Activated CD8-positive, alpha-beta T cell treated with anti-CD3 and anti-CD28 coated beads for 36 hours (primary cell): ENCODE measurements at regions of chr20 and their contacts with region 1.

Region 1: DNA sequence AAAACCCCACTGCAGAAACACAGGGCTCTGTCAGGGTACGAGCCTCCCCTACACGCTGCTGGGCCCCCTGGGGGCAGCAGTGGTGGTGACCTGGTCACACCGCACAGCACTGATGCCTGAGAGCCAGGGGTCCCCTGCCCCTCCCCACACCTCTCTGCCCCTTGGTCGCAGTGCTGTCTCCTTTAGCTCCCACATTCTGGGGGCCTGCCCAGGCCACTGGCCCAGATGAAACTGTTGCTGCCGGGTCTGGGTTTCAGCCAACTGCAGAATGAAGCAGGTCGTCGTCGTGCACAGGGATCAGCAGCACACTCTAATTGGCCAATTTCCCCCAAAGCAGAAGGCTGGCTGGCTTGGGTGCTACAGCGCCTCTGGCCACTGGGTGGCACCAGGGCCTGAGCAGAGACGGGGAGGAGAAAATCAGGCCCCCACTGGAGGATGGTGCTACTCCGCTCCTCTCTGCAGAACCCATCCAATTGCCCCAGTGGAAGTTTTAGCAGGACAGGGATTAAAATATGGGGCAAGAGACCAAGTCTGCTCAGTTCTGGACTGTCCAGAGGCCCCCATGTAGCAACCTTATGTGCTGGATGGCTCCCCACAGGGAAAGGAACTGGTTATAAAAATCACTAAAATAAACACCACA is 26.1 kb downstream of the DIDO1 start:
- DNase-seq: peak; percentile 85
- ATAC-seq: peak; percentile 95
- H3K4me3 Mint-ChIP-seq: no peak overlapping the region
- H3K27ac Mint-ChIP-seq: peak overlapping the region; percentile 60
- H3K4me1 Mint-ChIP-seq: peaks cover 40% of the 10 kb centered on the region
- H3K27me3 Mint-ChIP-seq: no peaks in the 10 kb centered on the region
- CTCF ChIP-seq: peak; percentile 97

Region 2: DNA sequence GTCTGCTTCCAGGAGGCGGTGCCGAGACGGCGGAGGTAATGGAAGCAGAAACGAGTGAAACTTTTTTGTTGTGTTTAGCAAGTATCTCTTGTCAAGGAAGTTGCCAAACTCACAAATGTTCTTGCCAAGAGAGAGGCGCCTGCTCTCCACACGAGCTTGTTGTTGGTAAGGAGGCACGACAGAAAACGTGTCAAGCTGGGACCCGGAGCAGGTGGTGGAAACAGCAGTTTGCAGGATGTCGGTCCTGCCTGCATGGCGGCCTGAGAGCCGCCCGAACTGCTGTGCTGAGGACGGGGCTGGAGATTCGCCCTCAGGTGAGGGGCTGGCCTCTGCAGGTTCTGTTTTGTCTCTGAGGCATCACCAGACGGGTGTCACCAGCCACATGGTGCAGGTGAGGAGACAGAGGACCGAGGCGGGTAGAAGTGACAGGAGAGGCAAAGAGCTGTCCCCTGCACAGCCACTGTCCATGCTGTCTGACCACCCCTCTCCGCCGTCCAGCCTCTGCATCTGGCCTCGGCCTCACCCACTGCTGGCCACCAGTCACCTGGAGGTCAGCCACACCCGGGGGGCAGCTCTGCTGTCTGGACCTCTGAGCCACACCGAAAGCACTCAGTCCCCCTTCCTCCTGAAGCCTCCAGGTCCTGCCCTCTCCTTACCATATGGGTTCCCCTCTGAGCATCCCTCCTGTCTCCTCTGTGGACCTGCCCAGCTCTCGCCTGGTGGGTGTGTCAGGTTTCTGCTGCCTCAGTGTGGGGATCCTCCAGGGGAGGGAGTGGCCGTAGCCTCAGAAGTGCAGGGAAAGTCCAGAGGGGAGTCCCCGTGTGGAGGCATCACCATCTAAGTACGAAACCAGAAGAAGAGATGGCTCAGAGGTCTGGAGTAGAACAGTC is 1096.0 kb before region 1 on chr20:
- CTCF ChIA-PET with region 1: no interaction called
- POLR2A ChIA-PET with region 1: no interaction called
- intact Hi-C with region 1: no loop called
- DNase-seq: peak; percentile 19
- ATAC-seq: peak; percentile 55
- H3K4me3 Mint-ChIP-seq: no peak overlapping the region
- H3K27ac Mint-ChIP-seq: no peak overlapping the region
- H3K4me1 Mint-ChIP-seq: peaks cover 5% of the 10 kb centered on the region
- H3K27me3 Mint-ChIP-seq: peaks cover 7% of the 10 kb centered on the region
- CTCF ChIP-seq: no peak

Region 3: DNA sequence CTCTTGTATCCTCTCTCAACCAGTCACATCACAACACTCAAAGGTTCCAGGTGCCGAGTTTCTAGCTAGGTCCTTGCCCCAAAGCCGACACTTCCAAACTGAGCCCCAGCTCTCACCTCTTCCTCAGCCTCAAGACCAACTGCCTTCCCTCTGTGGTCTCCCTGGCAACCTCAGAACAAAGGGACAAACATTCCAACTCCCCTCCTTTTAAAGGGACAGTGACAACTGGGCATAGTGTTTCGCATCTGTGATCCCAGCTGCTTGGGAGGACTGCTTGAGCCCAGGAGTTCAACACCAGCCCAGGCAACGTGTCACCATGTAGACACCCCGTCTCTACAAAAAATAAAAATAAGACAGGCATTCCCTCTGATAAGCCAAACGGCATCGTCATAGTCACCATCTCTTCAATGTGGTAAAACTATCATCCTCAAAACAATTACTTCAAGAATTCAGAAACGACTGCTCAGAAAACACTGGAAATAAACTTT is 14.8 kb after region 1 on chr20:
- CTCF ChIA-PET with region 1: interaction called, 113 read pairs
- POLR2A ChIA-PET with region 1: interaction called, 50 read pairs
- intact Hi-C with region 1: no loop called
- DNase-seq: peak; percentile 48
- ATAC-seq: no peak
- H3K4me3 Mint-ChIP-seq: peak overlapping the region; percentile 9
- H3K27ac Mint-ChIP-seq: peak overlapping the region; percentile 90
- H3K4me1 Mint-ChIP-seq: peaks cover 71% of the 10 kb centered on the region
- H3K27me3 Mint-ChIP-seq: no peaks in the 10 kb centered on the region
- CTCF ChIP-seq: no peak

Region 4: DNA sequence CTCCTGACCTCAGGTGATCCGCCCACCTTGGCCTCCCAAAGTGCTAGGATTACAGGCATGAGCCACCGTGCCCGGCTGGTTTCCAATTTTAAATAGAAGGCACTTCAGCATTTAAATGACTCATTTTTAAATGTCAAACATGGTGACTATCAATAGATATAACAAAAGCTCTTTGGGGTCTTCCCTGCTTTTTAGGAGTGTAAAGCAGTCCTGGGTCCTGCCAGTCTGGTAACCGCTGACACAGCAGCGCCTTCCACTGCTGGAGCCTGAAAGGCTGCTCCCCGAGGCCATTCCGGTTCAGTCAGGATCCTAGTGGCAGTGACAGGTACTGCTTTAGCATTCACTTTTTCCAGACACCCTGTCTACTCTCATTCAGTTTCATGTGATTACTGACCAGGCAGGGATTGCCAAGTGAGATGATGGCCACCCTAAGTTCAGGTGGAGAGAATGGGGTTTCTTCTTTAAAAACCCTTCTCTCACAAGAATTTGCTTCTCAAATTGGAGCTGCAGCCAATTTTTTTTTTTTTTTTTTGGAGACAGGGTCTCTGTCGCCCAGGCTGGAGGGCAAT is 21.0 kb after region 1 on chr20:
- CTCF ChIA-PET with region 1: interaction called, 113 read pairs
- POLR2A ChIA-PET with region 1: interaction called, 50 read pairs
- intact Hi-C with region 1: no loop called
- DNase-seq: peak; percentile 89
- ATAC-seq: peak; percentile 70
- H3K4me3 Mint-ChIP-seq: peak overlapping the region; percentile 15
- H3K27ac Mint-ChIP-seq: peak overlapping the region; percentile 90
- H3K4me1 Mint-ChIP-seq: peaks cover 74% of the 10 kb centered on the region
- H3K27me3 Mint-ChIP-seq: no peaks in the 10 kb centered on the region
- CTCF ChIP-seq: peak; percentile 71

Region 5: GRCh38 chr20:62926239-62927104 is 26.3 kb after region 1 on chr20 and contains the start of gene DIDO1:
- CTCF ChIA-PET with region 1: interaction called, 17 read pairs
- POLR2A ChIA-PET with region 1: interaction called, 50 read pairs
- intact Hi-C with region 1: no loop called
- DNase-seq: peak; percentile 89
- ATAC-seq: peak; percentile 75
- H3K4me3 Mint-ChIP-seq: peak within 1 kb of the TSS; percentile 97
- H3K27ac Mint-ChIP-seq: peak within 1 kb of the TSS; percentile 95
- H3K4me1 Mint-ChIP-seq: peaks cover 64% of the 10 kb centered on the region
- H3K27me3 Mint-ChIP-seq: no peaks in the 10 kb centered on the region
- CTCF ChIP-seq: peak; percentile 46
- total RNA-seq, gene DIDO1: 45.9 to 47.4 TPM

Region 6: DNA sequence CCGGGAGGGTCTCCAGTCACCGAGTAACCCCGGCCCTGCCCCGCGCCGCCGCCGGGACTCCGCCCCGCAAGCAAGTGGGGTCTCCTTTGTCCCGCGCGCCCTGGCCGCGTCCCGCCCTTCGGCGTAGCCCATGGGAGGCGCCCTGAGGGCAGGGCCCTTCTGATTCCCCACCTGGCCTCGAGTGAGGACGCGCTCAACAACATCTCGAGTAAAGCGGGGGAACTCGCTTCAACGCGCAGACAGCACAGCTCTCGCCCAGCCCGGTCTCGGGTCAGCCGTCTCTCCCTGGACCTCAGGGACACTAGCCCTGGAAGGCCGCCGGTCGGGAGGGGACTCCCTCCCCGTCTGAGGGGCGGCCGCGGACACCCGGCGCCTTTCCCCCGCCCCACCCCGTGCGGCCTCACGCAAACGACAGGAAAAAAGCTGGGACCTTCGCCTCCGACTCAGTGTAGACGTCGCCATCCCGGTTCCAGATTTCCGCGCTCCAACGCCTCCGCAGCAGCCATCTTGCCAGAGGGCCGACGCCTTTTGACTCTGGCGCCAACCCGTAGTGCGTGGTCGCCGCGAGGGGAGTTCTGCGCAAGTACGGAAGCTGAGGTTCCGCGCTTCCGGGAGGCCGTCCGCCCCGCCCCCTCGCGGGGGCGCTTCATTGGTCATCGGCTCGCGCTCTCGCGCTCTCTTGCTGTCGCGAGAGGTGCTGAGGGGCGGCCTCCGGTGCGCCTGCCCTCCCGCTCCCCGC is 37.4 kb after region 1 on chr20:
- CTCF ChIA-PET with region 1: interaction called, 6 read pairs
- POLR2A ChIA-PET with region 1: interaction called, 10 read pairs
- intact Hi-C with region 1: no loop called
- DNase-seq: peak; percentile 98
- ATAC-seq: peak; percentile 93
- H3K4me3 Mint-ChIP-seq: no peak overlapping the region
- H3K27ac Mint-ChIP-seq: peak overlapping the region; percentile 98
- H3K4me1 Mint-ChIP-seq: peaks cover 31% of the 10 kb centered on the region
- H3K27me3 Mint-ChIP-seq: no peaks in the 10 kb centered on the region
- CTCF ChIP-seq: no peak

Region 7: DNA sequence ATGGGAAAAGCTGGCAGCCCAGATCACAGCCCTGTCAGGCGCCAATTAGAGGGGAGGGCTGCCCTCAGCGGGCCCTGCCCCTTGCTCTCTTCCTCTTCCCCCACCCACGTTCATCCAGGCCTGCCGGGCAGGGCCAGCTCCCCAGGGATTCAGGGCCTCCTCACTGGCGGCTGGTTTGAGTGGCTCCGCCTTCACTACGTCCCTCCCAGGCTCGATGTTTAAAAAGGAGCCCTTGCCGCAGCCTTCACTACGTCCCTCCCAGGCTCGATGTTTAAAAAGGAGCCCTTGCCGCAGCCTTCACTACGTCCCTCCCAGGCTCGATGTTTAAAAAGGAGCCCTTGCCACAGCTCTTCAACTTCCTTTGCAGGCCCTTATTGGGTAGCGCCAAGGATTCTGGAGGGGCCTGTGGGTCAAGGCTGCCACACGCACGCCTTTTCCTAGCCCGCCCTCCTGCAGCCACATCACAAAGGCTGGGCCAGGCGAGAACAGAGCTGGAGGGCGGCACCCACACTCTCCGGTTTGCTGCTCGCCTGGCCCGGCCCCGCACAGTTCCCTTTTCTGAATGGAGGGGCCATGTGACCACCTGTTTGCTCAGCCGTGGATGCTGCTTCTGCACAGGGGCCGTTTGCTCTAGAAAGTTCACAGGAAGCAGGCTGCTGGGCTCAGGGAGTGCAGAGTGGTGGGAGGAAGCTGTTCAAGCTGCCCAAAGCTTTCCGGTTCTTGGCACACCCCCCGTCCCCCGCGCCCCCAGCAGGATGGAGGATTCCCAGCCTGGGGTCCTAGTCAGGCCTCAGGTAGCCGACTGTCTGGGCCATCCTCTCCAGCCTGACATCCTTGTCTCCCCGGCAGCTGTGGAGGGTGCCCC is 53.9 kb after region 1 on chr20:
- CTCF ChIA-PET with region 1: interaction called, 4 read pairs
- POLR2A ChIA-PET with region 1: interaction called, 4 read pairs
- intact Hi-C with region 1: loop called (anchors 10 kb)
- DNase-seq: peak; percentile 89
- ATAC-seq: peak; percentile 86
- H3K4me3 Mint-ChIP-seq: peak overlapping the region; percentile 85
- H3K27ac Mint-ChIP-seq: peak overlapping the region; percentile 90
- H3K4me1 Mint-ChIP-seq: peaks cover 24% of the 10 kb centered on the region
- H3K27me3 Mint-ChIP-seq: no peaks in the 10 kb centered on the region
- CTCF ChIP-seq: no peak

Region 8: GRCh38 chr20:63009045-63009961 is 109.1 kb after region 1 on chr20:
- CTCF ChIA-PET with region 1: interaction called, 9 read pairs
- POLR2A ChIA-PET with region 1: no interaction called
- intact Hi-C with region 1: loop called (anchors 2 kb)
- DNase-seq: peak; percentile 88
- ATAC-seq: peak; percentile 74
- H3K4me3 Mint-ChIP-seq: peak overlapping the region; percentile 66
- H3K27ac Mint-ChIP-seq: no peak overlapping the region
- H3K4me1 Mint-ChIP-seq: peaks cover 32% of the 10 kb centered on the region
- H3K27me3 Mint-ChIP-seq: peaks cover 41% of the 10 kb centered on the region
- CTCF ChIP-seq: peak; percentile 95